ENCODE measurements at regions of chr20 and their contacts with region 1.

Region 1: GRCh38 chr20:22691369-22692118 is 107.2 kb upstream of the FOXA2 start:
- DNase-seq: peak; percentile 84 to 91 (median 90)
- ATAC-seq: peak; percentile 92 to 94
- H3K4me3 ChIP-seq: no peak overlapping the region
- H3K27ac ChIP-seq: no peak overlapping the region
- H3K4me1 ChIP-seq: peaks cover 6% of the 10 kb centered on the region
- H3K27me3 ChIP-seq: no peaks in the 10 kb centered on the region

Region 2: GRCh38 chr20:22511943-22512910 is 179.3 kb before region 1 on chr20:
- intact Hi-C with region 1: no loop called
- DNase-seq: no peak
- ATAC-seq: peak; percentile 51 to 52
- H3K4me3 ChIP-seq: no peak overlapping the region
- H3K27ac ChIP-seq: no peak overlapping the region
- H3K4me1 ChIP-seq: no peaks in the 10 kb centered on the region
- H3K27me3 ChIP-seq: peaks cover 5% of the 10 kb centered on the region

Region 3: DNA sequence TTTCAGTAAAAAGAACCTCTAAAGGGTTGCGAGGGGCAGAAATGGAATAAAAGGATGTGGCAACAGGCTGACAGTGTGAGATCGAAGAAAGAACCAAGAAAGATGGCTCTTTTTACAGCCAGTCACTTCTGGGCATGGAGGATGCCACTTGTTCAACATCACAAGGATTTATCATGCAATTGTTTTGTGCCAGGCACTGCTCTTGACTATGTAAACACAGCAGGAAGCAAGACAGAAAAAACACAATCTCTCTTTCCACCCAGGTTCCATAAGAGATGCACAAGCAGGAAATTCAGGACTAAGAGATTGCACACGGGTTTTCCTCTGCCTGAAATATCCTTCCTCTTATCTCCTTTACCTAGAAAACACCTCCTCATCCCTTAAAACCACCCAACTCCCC is 145.2 kb before region 1 on chr20:
- intact Hi-C with region 1: no loop called
- DNase-seq: no peak
- ATAC-seq: no peak
- H3K4me3 ChIP-seq: no peak overlapping the region
- H3K27ac ChIP-seq: no peak overlapping the region
- H3K4me1 ChIP-seq: no peaks in the 10 kb centered on the region
- H3K27me3 ChIP-seq: no peaks in the 10 kb centered on the region

Region 4: DNA sequence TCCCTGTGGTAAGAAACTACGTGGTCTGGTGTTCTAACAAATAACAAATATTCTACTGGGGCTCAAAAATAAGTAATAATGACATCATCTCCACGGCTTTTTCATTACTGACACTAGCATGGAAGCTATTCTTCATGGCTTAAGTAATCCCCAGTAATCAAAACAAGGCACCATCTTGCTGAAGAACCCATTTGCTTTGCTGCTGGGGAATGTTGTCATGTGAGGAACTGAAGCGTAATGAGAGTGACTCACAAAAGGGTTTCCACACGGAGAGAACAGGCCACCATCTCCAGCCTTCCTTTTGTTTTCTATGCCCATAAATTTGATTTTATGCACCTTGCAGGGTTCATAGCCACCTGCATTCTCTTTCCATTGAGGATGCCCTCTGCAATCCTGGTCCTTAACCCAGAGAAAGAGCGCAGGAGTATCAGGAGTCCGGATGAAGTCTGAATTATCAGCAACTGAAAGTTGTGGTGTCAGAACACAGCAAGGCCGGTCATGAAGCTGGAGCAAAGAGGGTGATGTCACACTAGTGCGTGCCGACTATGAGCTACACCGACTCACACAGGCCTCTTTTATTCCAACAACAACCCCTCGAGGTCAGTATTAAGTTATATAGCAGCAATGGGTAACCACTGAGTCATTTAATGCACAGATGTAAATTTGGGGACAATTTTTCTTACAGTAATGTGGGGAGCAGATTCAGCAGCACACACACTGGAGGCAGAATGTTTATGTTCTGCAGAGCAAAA is 169.9 kb after region 1 on chr20:
- intact Hi-C with region 1: loop called in 1 of 4 experiments (anchors 10 kb)
- DNase-seq: no peak
- ATAC-seq: no peak
- H3K4me3 ChIP-seq: no peak overlapping the region
- H3K27ac ChIP-seq: peak overlapping the region; percentile 20
- H3K4me1 ChIP-seq: no peaks in the 10 kb centered on the region
- H3K27me3 ChIP-seq: no peaks in the 10 kb centered on the region

Region 5: DNA sequence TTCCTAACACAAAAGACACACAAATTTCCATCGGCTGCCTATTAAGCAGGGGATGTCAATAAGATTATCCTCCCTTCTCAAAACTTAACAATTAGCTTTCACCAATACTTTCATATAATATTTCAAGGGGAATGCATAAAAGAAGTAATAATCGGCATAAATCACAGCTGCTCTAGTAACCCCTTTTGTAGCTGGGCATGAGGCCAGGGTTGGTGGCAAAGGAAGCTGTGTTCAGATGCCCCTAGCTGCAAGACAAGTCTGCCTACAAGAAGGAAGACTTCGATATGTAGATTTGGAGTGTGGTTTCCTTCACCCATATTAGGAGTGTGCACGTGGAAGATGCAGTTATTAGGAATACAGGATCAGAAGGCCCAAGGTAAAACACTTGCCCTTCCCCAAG is 186.6 kb after region 1 on chr20:
- intact Hi-C with region 1: no loop called
- DNase-seq: no peak
- ATAC-seq: no peak
- H3K4me3 ChIP-seq: no peak overlapping the region
- H3K27ac ChIP-seq: no peak overlapping the region
- H3K4me1 ChIP-seq: no peaks in the 10 kb centered on the region
- H3K27me3 ChIP-seq: no peaks in the 10 kb centered on the region

Region 6: DNA sequence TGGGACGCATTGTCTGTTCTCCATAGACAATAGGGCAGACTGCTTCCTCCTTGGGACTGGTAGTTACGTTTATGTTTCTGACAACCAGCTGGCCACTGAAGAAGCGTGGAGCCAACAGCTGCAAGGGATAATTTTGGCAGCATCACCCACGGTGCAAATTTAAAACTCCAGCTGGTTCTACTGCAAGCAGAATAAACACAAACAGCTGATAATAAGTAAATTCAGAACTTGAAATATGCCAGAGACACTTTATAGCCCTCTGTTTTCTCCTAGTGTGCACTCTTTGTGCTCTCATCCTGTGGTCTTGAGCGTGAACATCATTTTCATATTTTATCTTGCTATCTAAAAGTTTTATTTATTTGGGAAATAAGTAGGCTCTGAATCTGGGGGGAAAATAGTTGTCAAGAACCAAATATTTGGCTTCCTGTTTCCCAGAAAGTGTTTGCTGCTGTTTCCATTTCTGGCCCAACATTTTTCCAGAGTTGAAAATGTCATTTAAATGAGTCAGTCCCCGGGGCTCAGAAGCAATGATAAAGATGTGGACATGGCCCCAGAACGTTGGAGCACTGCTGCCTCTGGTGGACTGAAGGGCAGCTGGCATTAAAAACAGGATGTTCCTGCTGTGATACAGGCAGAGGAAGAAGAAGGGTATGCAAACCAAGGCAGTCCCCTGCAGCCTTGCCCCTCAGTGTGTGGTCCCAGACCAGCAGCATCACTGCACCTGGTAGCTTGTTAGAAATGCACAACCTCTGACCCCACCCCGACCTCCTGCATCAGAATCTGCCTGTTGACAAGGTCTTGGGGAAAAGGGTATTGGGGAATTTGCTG is 370.4 kb after region 1 on chr20:
- intact Hi-C with region 1: loop called in 1 of 4 experiments (anchors 10 kb)
- DNase-seq: peak; percentile 68 to 85 (median 70)
- ATAC-seq: peak; percentile 91 to 94
- H3K4me3 ChIP-seq: no peak overlapping the region
- H3K27ac ChIP-seq: peak overlapping the region; percentile 74
- H3K4me1 ChIP-seq: peaks cover 17% of the 10 kb centered on the region
- H3K27me3 ChIP-seq: no peaks in the 10 kb centered on the region

Region 7: DNA sequence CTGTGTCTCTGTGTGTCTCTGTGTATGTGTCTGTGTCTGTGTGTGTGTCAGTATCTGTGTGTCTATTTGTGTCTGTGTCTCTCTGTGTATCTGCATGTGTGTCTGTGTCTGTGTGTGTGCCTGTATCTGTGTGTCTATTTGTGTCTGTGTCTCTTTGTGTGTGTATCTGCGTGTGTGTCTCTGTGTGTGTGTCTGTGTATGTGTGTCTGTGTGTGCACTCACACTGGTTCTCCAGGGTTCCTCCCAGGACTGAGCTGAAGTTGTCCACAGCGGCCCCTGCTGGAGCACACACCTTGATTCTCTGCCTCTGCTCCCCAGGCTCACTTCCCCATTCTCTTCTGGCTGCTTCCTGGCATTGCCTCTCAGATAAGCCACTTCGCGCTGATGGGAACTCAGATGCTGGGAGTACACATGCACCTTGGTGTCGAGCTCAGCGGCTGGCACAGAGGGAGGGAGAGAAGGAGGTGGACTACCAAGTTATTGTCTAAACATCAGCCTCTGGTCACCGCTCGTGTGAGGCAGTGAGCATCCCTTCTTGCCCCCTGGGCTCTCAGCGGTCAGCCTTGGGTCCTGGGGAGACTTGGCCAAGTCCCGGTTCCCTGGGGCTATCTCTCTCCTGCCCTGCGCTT is 554.1 kb after region 1 on chr20:
- intact Hi-C with region 1: loop called in 1 of 4 experiments (anchors 5 kb)
- DNase-seq: peak; percentile 73 to 85 (median 84)
- ATAC-seq: peak; percentile 70 to 82
- H3K4me3 ChIP-seq: no peak overlapping the region
- H3K27ac ChIP-seq: peak overlapping the region; percentile 25
- H3K4me1 ChIP-seq: no peaks in the 10 kb centered on the region
- H3K27me3 ChIP-seq: no peaks in the 10 kb centered on the region

Region 8: GRCh38 chr20:23340524-23340923 is 649.0 kb after region 1 on chr20:
- intact Hi-C with region 1: loop called (anchors 2 to 10 kb)
- DNase-seq: peak; percentile 64 to 88 (median 78)
- ATAC-seq: peak; percentile 80 to 90
- H3K4me3 ChIP-seq: no peak overlapping the region
- H3K27ac ChIP-seq: no peak overlapping the region
- H3K4me1 ChIP-seq: no peaks in the 10 kb centered on the region
- H3K27me3 ChIP-seq: no peaks in the 10 kb centered on the region

Measured in right cardiac atrium (tissue), 5 donors.